Activated CD4-positive, alpha-beta T cell treated with anti-CD3 and anti-CD28 coated beads for 36 hours (primary cell): ENCODE measurements at regions of chr18 and their contacts with region 1.

Region 1: GRCh38 chr18:8654503-8655451 is 45.5 kb downstream of the RAB12 start:
- DNase-seq: no peak
- ATAC-seq: no peak
- H3K4me3 Mint-ChIP-seq: no peak overlapping the region
- H3K27ac Mint-ChIP-seq: no peak overlapping the region
- H3K4me1 Mint-ChIP-seq: no peaks in the 10 kb centered on the region
- H3K27me3 Mint-ChIP-seq: peaks cover 10% of the 10 kb centered on the region

Region 2: DNA sequence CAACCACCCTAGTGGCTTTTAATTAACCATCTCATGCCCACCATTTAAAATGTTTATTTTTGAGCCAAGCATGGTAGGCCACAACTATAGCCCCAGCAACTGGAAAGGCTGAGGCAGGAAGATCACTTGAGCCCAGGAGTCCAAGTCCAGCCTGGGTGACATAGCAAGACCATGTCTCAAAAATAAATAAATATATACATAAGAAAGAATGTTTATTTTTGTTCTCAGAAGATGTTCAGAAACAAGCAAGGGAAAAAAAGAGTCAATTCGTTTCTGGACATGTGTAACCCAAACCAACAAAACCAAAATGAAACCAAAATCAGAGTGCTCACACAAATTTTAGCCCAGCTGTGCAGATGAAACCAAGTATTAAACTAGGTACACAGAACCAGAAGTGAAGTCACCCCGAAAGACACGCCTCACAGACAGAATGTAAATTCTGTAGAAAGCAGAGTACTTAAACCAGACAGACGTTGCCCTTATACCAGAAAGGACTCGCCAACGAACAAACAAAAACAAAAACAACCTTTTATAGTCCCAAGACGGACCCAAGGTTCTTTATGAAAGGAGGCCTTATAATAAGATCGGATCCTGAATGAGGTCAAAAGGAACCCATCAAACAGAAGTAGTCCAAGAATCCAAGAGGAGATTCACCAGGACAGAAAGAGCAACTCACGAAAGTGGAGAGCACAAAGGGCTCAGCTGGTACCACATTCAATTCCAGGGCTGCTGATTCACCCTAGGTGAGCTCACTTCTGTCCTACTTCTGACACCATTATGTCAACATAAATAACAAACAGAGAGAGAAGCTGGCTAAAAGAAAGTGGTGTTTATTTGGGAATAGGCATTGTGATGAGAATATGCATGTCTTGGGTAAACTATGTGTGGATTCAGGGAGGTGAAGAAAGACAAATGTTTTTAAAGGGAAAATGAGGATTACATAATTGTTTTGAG is 18.8 kb after region 1 on chr18:
- CTCF ChIA-PET with region 1: interaction called, 17 read pairs
- POLR2A ChIA-PET with region 1: no interaction called
- intact Hi-C with region 1: no loop called
- DNase-seq: no peak
- ATAC-seq: no peak
- H3K4me3 Mint-ChIP-seq: no peak overlapping the region
- H3K27ac Mint-ChIP-seq: no peak overlapping the region
- H3K4me1 Mint-ChIP-seq: no peaks in the 10 kb centered on the region
- H3K27me3 Mint-ChIP-seq: no peaks in the 10 kb centered on the region

Region 3: GRCh38 chr18:8988261-8988871 is 333.6 kb after region 1 on chr18:
- CTCF ChIA-PET with region 1: interaction called, 54 read pairs
- POLR2A ChIA-PET with region 1: no interaction called
- intact Hi-C with region 1: loop called (anchors 1 to 2 kb)
- DNase-seq: peak; percentile 72
- ATAC-seq: peak; percentile 87
- H3K4me3 Mint-ChIP-seq: no peak overlapping the region
- H3K27ac Mint-ChIP-seq: no peak overlapping the region
- H3K4me1 Mint-ChIP-seq: no peaks in the 10 kb centered on the region
- H3K27me3 Mint-ChIP-seq: peaks cover 13% of the 10 kb centered on the region

Region 4: DNA sequence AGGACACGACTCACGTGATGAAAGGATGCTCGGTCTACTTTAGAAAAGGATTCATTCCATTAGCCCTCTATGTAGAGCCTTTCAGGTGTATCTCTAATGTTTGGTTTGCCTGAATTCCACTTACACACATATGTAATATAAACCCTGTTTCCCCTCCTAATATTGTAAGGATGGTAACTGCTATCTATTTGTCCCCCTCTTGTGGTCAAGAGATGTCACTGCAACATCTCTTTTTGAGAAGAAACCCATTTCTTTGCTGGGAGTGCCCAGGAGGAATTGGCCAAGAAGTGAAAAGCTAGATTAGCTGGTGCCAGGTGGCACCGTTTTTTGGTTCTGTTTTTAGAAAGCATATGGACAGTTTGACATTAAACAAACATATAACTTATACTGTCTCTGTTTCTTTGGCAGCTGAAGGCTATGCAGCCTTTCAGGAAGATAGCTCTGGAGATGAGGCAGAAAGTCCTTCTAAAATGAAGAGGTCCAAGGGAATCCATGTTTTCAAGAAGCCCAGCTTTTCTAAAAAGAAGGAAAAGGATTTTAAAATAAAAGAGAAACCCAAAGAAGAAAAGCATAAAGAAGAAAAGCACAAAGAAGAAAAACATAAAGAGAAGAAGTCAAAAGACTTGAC is 861.8 kb after region 1 on chr18:
- CTCF ChIA-PET with region 1: interaction called, 3 read pairs
- POLR2A ChIA-PET with region 1: no interaction called
- intact Hi-C with region 1: loop called in 1 of 2 experiments (anchors 5 kb)
- DNase-seq: peak; percentile 10
- ATAC-seq: peak; percentile 47
- H3K4me3 Mint-ChIP-seq: no peak overlapping the region
- H3K27ac Mint-ChIP-seq: no peak overlapping the region
- H3K4me1 Mint-ChIP-seq: peaks cover 2% of the 10 kb centered on the region
- H3K27me3 Mint-ChIP-seq: no peaks in the 10 kb centered on the region